ENCODE measurements at regions of chr9 and their contacts with region 1.

Region 1: DNA sequence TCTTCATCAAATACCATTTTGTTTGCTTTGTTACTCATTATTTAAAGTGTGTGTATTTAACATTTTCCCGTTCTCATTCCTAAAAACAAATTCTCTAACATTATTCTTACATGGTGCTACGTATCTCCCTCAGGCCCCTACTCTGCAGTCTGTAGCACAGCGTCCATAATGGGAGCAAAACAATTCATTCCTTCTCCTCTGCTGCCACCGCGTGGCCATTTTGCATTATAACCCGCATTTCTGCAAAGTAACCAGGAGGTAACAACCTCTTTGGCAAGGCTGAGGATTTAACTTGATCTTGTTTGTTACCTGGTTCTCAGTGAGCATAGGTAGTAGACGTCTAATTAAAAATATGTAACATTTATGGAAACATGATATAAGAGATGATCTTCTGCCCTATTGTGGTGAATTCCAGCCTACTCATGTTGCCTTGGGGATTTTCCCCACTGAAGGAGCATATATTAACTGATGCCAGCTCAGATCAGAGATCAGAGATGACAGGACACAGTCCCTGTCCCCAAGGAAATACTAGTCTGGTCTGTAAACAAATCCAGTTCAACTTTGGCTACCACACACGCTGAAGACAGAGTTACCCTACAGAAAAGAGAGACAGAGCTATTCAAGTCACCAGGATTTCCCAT is 10.5 kb downstream of the OR1K1 start:
- DNase-seq: peak; percentile 74
- ATAC-seq: peak; percentile 91 to 93
- H3K4me3 ChIP-seq: no peak overlapping the region
- H3K27ac ChIP-seq: no peak overlapping the region
- H3K4me1 ChIP-seq: peaks cover 7% of the 10 kb centered on the region
- H3K27me3 ChIP-seq: no peaks in the 10 kb centered on the region
- CTCF ChIP-seq: peak; percentile 82

Region 2: DNA sequence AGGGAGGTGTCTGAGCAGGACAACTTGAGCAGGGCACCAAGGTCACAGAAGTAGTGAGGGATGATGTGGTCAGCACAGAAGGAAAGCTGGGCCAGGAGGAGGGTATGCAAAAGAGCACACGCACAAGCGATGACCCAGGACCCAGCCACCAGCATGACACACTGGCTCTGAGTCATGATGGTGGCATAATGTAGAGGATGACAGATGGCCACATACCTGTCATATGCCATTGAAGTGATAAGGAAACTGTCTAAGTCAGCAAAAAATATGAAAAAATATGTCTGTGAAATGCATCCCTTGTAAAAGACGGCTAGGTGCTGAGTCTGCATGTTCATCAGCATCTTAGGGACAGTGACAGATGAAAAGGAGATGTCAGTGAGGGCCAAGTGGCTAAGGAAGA is 333.1 kb before region 1 on chr9:
- intact Hi-C with region 1: loop called (anchors 10 kb)
- DNase-seq: no peak
- ATAC-seq: no peak
- H3K4me3 ChIP-seq: no peak overlapping the region
- H3K27ac ChIP-seq: no peak overlapping the region
- H3K4me1 ChIP-seq: no peaks in the 10 kb centered on the region
- H3K27me3 ChIP-seq: no peaks in the 10 kb centered on the region
- CTCF ChIP-seq: no peak